ENCODE measurements at regions of chr9 and their contacts with region 1.

Region 1: GRCh38 chr9:127300886-127301447 is 36.4 kb downstream of the GARNL3 start:
- DNase-seq: no peak
- ATAC-seq: no peak
- H3K4me3 ChIP-seq: no peak overlapping the region
- H3K27ac ChIP-seq: no peak overlapping the region
- H3K4me1 ChIP-seq: peaks cover 2 to 4% of the 10 kb centered on the region in 2 donors
- H3K27me3 ChIP-seq: no peaks in the 10 kb centered on the region

Region 2: GRCh38 chr9:127264462-127265219 is 36.3 kb before region 1 on chr9 and contains the start of gene GARNL3:
- intact Hi-C with region 1: loop called in 1 of 2 experiments (anchors 5 kb)
- DNase-seq: no peak
- ATAC-seq: no peak
- H3K4me3 ChIP-seq: no peak within 1 kb of the TSS
- H3K27ac ChIP-seq: no peak within 1 kb of the TSS
- H3K4me1 ChIP-seq: peaks cover 3 to 12% of the 10 kb centered on the region in 2 donors
- H3K27me3 ChIP-seq: no peaks in the 10 kb centered on the region
- total RNA-seq, gene GARNL3: 59.1 to 70.9 TPM

Region 3: GRCh38 chr9:127347831-127348779 is 47.1 kb after region 1 on chr9:
- intact Hi-C with region 1: no loop called
- DNase-seq: no peak
- ATAC-seq: peak; percentile 71
- H3K4me3 ChIP-seq: no peak overlapping the region
- H3K27ac ChIP-seq: no peak overlapping the region
- H3K4me1 ChIP-seq: peaks cover 0 to 2% of the 10 kb centered on the region in 2 donors
- H3K27me3 ChIP-seq: no peaks in the 10 kb centered on the region

Region 4: GRCh38 chr9:127495906-127496421 is 195.0 kb after region 1 on chr9:
- intact Hi-C with region 1: no loop called
- DNase-seq: no peak
- ATAC-seq: no peak
- H3K4me3 ChIP-seq: no peak overlapping the region
- H3K27ac ChIP-seq: peak overlapping the region; percentile 35 to 71
- H3K4me1 ChIP-seq: no peaks in the 10 kb centered on the region
- H3K27me3 ChIP-seq: no peaks in the 10 kb centered on the region

Measured in aorta (tissue), 5 donors.